ENCODE measurements at regions of chr5 and their contacts with region 1.

Region 1: GRCh38 chr5:159156426-159157238 is 52.7 kb downstream of the RNF145 start:
- DNase-seq: peak in 1 of 2 donors; percentile 89
- H3K4me3 ChIP-seq: no peak overlapping the region
- H3K27ac ChIP-seq: no peak overlapping the region
- H3K4me1 ChIP-seq: peaks cover 0 to 32% (median 8%) of the 10 kb centered on the region in 4 donors
- H3K27me3 ChIP-seq: no peaks in the 10 kb centered on the region
- CTCF ChIP-seq: peak in 5 of 7 experiments; percentile 57 to 89 (median 78)
- EP300 ChIP-seq: no peak
- POLR2A ChIP-seq: no peak

Region 2: GRCh38 chr5:158406884-158407823 is 749.5 kb before region 1 on chr5:
- intact Hi-C with region 1: no loop called
- DNase-seq: no peak
- H3K4me3 ChIP-seq: no peak overlapping the region
- H3K27ac ChIP-seq: no peak overlapping the region
- H3K4me1 ChIP-seq: no peaks in the 10 kb centered on the region
- H3K27me3 ChIP-seq: no peaks in the 10 kb centered on the region
- CTCF ChIP-seq: no peak
- EP300 ChIP-seq: no peak
- POLR2A ChIP-seq: no peak

Region 3: DNA sequence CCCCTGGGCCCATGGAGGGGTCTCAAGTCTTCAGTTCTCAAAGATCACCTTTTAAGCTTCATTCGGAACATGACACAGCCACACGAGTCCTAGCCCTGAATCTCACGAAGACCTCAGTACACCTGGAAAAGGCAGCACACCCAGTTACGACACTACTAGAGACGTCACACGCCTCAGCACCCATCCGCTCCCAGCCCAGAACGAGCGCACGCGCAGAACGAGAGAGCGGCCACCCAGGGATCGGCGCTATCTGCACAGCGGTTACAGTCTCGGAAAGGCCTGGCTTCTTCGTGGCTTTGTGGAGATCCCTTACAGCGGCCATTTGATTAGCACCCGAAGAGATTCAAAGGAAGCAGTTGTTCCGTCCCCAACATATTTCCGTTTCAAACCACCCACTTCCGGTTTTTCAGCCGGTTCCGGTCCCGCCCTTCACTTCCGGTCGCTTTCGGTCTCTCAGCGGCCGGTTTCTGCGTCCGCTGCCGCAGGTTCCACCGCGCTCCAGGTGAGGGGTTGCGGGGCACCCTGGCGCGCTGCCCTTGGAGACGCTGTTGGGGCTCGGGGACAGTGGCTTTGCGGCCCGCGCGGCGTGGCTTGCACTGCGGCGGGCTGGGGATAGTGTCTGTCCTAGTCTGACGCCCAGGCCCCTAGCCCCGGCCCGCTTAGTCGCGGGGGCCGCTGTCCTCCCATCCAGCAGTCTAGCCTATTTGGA is 106.4 kb after region 1 on chr5 and contains the start of gene UBLCP1:
- intact Hi-C with region 1: loop called (anchors 10 kb)
- DNase-seq: peak; percentile 84 to 95
- H3K4me3 ChIP-seq: peak within 1 kb of the TSS; percentile 62 to 93 (median 86)
- H3K27ac ChIP-seq: peak within 1 kb of the TSS; percentile 71 to 96 (median 93)
- H3K4me1 ChIP-seq: peaks cover 10 to 24% (median 21%) of the 10 kb centered on the region in 4 donors
- H3K27me3 ChIP-seq: no peaks in the 10 kb centered on the region
- CTCF ChIP-seq: no peak
- EP300 ChIP-seq: no peak
- POLR2A ChIP-seq: no peak
- total RNA-seq, gene UBLCP1: 1.2 to 24.4 (median 8.0) TPM

Region 4: GRCh38 chr5:159316519-159317383 is 160.1 kb after region 1 on chr5:
- intact Hi-C with region 1: loop called (anchors 10 kb)
- DNase-seq: peak; percentile 52 to 78
- H3K4me3 ChIP-seq: no peak overlapping the region
- H3K27ac ChIP-seq: no peak overlapping the region
- H3K4me1 ChIP-seq: no peaks in the 10 kb centered on the region
- H3K27me3 ChIP-seq: peaks cover 0 to 6% (median 0%) of the 10 kb centered on the region in 3 donors
- CTCF ChIP-seq: peak in 5 of 7 experiments; percentile 16 to 51 (median 45)
- EP300 ChIP-seq: no peak
- POLR2A ChIP-seq: no peak